Posterior vena cava (tissue), 2 donors: ENCODE measurements at regions of chr9 and their contacts with region 1.

Region 1: DNA sequence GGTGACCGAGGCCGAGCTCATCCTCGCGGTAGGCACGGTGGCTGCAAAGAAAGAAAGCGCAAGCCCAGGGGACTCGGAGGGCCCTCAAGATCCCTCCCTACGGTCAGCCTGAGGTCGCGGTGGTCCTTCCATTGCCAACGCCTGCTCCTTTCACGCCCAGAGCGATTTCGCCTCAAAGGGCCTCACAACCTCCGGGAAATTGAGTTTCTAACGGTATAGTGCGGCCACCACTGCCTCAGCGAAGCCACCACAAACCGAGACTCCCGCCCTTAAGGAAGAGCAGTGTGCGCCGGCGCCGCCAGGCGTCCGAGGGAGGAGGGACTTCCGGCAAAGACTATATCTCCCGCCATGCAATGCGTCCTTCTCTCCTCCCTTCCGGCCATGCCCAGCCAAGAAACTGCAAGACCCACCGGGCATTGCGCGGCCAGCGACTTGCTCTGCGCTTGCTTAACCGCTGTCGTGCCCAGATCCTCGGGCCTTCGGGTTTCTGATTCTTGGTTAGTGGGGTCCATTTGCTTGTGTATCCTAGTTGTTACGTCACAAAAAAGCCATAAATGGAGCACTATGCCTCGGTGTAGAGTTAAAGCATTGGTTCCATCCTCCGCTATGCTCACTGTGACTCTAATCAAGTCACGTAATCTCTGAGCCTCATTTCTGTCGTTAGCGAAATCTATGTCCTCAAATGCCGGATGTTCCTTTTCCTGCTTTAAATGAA is at the start of gene HAUS6:
- DNase-seq: peak; percentile 99
- total RNA-seq, gene HAUS6: 9.8 to 10.5 TPM

Region 2: GRCh38 chr9:19048966-19049916 is 53.5 kb before region 1 on chr9 and contains the start of gene RRAGA:
- intact Hi-C with region 1: loop called in 1 of 2 experiments (anchors 10 kb)
- DNase-seq: peak; percentile 99
- total RNA-seq, gene RRAGA: 88.3 to 88.7 TPM

Region 3: GRCh38 chr9:19154135-19154612 is 51.4 kb after region 1 on chr9:
- intact Hi-C with region 1: no loop called
- DNase-seq: no peak

Region 4: DNA sequence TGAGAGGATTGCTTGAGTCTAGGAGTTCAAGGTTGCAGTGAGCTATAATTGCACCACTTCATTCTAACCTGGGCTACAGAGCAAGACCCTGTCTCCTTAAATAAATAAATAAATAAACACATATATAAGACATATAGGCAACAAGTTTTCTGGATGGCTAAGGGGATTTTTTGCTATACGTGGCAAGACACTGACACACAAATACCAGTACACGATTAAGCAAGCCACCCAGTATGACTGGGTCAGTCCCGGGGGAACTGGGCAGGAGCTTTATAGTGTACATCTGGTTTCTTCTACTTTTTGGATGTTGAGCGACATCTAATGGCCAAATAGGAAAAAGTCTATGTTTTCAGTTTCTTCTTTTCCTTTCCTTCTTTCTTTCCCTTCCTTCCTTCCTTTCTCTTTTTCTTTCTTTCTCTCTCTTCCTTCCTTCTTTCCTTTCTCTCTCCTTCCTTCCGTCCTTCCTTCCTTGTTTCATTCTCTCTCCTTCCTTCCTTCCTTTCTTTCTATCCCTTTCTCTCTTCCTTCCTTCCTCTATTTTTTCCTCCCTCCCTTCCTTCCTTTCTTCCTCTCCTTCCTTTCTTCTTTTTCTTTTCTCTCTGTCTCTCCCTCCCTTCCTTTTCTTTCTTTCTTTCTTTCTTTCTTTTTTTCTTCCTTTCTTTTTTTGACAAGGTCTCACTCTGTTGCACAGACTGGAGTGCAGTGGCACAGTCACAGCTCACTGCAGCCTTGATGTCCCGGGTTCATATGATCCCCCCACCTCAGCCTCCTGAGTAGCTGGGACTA is 71.5 kb after region 1 on chr9:
- intact Hi-C with region 1: loop called (anchors 5 kb)
- DNase-seq: peak; percentile 92

Region 5: GRCh38 chr9:19424176-19424779 is 321.5 kb after region 1 on chr9:
- intact Hi-C with region 1: no loop called
- DNase-seq: no peak

Region 6: GRCh38 chr9:19689328-19690101 is 586.7 kb after region 1 on chr9:
- intact Hi-C with region 1: no loop called
- DNase-seq: no peak